K562 (cell line): ENCODE measurements at regions of chr1 and their contacts with region 1.

Region 1: DNA sequence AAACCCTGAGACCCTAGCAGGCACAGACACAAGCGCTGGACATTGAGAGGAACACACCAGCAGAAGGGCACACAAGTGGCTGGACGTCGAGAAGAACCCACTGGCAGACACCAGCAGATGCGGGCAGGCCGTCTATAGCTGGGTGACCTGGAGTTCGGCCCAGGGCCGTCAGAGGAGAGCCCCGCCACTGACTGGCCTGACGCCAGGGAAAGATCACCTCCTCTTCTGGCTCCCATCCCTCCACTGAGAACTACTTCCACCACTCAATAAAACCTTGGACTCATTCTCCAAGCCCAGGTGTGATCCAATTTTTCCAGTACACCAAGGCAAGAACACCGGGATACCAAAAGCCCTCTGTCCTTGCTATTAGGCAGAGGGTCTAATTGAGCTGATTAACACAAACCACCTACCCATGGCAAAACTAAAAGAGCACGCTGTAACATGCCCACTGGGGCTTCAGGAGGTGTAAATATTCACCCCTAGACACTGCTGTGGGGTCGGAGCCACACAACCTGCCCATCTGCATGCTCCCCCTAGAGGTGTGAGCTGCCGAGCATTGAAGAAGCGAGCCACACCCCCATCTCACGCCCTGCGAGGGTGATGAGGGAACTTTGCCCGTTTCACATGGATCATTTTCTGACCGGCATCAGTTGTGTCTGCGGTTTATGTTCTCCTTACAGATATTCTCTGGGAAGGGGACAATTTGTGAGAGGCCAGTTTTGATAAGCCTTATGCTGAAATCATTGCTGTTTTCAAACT is 104.8 kb downstream of the HLX start:
- DNase-seq: peak in 1 of 4 experiments; percentile 64
- ATAC-seq: peak; percentile 97
- H3K4me3 ChIP-seq: no peak overlapping the region
- H3K27ac ChIP-seq: no peak overlapping the region
- H3K4me1 ChIP-seq: peaks cover 7% of the 10 kb centered on the region in 2 experiments; a peak in 2 of 5 replicates
- H3K27me3 ChIP-seq: no peaks in the 10 kb centered on the region
- CTCF ChIP-seq: peak; percentile 48 to 69 (median 65)
- EP300 ChIP-seq: no peak
- POLR2A ChIP-seq: no peak
- RAD21 ChIP-seq: peak in 1 of 2 experiments; percentile 52; a peak in 2 of 4 replicates

Region 2: DNA sequence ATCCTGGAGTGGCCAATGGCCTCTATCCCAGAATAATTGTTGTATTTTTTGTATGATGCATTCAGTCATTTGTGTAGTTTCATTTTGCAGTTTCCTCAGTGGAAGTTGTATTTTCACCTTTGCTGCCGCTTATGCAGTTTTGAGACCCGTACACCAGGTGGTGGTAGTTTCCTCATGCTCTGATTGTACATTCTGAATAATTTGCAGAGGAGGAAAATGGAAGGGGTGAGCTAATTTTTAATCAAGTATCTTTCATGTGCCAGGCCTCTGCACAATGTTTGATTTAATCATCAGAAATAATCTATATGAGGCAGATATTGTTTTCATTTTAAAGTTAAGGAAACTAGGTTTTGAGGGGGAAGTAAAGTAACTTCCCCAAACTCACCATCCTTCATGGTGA is 75.3 kb before region 1 on chr1:
- CTCF ChIA-PET with region 1: no interaction called
- POLR2A ChIA-PET with region 1: no interaction called
- in situ Hi-C with region 1: no loop called
- intact Hi-C with region 1: loop called (anchors 5 kb)
- DNase-seq: peak in 2 of 4 experiments; percentile 36 to 37
- ATAC-seq: peak; percentile 60; the same call in 2 of the 3 replicates
- H3K4me3 ChIP-seq: no peak overlapping the region
- H3K27ac ChIP-seq: no peak overlapping the region
- H3K4me1 ChIP-seq: no peaks in the 10 kb centered on the region
- H3K27me3 ChIP-seq: peaks cover 0 to 11% of the 10 kb centered on the region in 2 experiments; a peak in 2 of 5 replicates
- CTCF ChIP-seq: peak; percentile 38 to 63 (median 43); a peak in 4 of 6 replicates
- EP300 ChIP-seq: no peak
- POLR2A ChIP-seq: no peak
- RAD21 ChIP-seq: peak; percentile 72 to 74